T-cell (primary cell): ENCODE measurements at regions of chr3 and their contacts with region 1.

Region 1: GRCh38 chr3:195859061-195859845 is 47.5 kb upstream of the MUC4 start:
- DNase-seq: peak; percentile 16 to 83 (median 62)
- ATAC-seq: peak; percentile 57 to 71 (median 64)
- H3K4me3 ChIP-seq: peak overlapping the region in 1 of 2 donors; percentile 56
- H3K4me3 Mint-ChIP-seq: peak overlapping the region in 2 of 3 donors; percentile 58 to 62
- H3K27ac ChIP-seq: no peak overlapping the region
- H3K27ac Mint-ChIP-seq: no peak overlapping the region
- H3K4me1 ChIP-seq: peaks cover 0 to 7% of the 10 kb centered on the region in 2 experiments
- H3K4me1 Mint-ChIP-seq: peaks cover 4 to 7% (median 6%) of the 10 kb centered on the region in 3 donors
- H3K27me3 ChIP-seq: peaks cover 0 to 12% of the 10 kb centered on the region in 2 experiments
- H3K27me3 Mint-ChIP-seq: peaks cover 0 to 1% of the 10 kb centered on the region in 2 donors

Region 2: GRCh38 chr3:195187609-195188425 is 671.4 kb before region 1 on chr3:
- CTCF ChIA-PET with region 1: no interaction called
- POLR2A ChIA-PET with region 1: no interaction called
- DNase-seq: no peak
- ATAC-seq: no peak
- H3K4me3 ChIP-seq: no peak overlapping the region
- H3K4me3 Mint-ChIP-seq: no peak overlapping the region
- H3K27ac ChIP-seq: no peak overlapping the region
- H3K27ac Mint-ChIP-seq: no peak overlapping the region
- H3K4me1 ChIP-seq: peaks cover 2 to 20% of the 10 kb centered on the region in 2 experiments
- H3K4me1 Mint-ChIP-seq: peaks cover 29 to 36% (median 36%) of the 10 kb centered on the region in 3 donors
- H3K27me3 ChIP-seq: no peaks in the 10 kb centered on the region
- H3K27me3 Mint-ChIP-seq: no peaks in the 10 kb centered on the region

Region 3: DNA sequence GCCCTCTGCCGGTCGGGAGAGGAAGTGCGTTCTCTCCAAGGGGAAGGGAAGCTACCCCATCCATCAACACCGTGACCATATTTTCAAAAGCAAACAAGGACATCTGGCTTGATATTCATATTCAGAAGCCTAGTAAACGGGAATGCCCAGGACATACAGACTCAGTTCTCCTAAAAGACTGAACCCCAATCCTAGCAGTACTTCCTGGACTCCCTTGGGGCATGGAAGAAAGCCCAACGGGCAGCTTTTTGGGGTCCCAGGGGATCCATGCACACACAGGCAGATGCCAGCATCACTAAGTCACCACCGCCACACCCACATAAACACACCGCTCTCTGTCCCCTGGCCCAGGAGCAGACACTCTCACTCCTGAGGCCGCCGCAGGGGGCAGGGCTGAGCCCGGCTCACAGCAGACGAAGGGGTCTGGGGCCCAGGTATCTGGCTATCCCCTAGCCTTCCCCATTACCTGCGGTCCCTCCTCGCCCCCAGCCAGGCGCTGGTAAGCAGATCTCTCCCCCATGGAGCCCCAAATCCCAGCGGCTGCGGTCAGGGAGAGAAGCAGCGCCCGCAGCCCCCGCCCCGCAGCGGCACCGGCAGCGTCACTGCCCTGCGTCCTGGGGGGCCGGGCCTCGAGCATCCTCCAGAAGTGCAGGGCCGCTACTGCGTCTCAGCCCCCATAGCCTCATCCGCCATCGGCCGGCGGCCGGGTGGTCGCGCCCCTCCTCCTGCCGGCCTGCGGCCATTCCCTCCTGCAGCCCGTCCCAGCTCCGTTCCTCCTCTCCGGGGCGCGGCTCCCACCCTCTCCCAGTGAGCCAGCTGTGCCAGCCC is 35.7 kb after region 1 on chr3:
- CTCF ChIA-PET with region 1: interaction called, 5 to 12 read pairs
- POLR2A ChIA-PET with region 1: no interaction called
- DNase-seq: peak; percentile 37 to 85 (median 57)
- ATAC-seq: peak; percentile 56 to 70 (median 67)
- H3K4me3 ChIP-seq: peak overlapping the region; percentile 70 to 71
- H3K4me3 Mint-ChIP-seq: peak overlapping the region; percentile 89 to 93 (median 92)
- H3K27ac ChIP-seq: peak overlapping the region; percentile 60
- H3K27ac Mint-ChIP-seq: peak overlapping the region; percentile 87 to 90
- H3K4me1 ChIP-seq: peaks cover 7 to 69% of the 10 kb centered on the region in 2 experiments
- H3K4me1 Mint-ChIP-seq: peaks cover 47 to 60% (median 50%) of the 10 kb centered on the region in 3 donors
- H3K27me3 ChIP-seq: no peaks in the 10 kb centered on the region
- H3K27me3 Mint-ChIP-seq: no peaks in the 10 kb centered on the region